Activated CD8-positive, alpha-beta memory T cell treated with anti-CD3 and anti-CD28 coated beads, Interleukin-2, amount 10 ng/mL, durations not matched to agents 7 days and 5 days (primary cell): ENCODE measurements at regions of chr14 and their contacts with region 1.

Region 1: GRCh38 chr14:22536853-22537338 is 52.1 kb downstream of the DAD1 start:
- DNase-seq: peak; percentile 94
- ATAC-seq: peak; percentile 90
- H3K4me3 Mint-ChIP-seq: peak overlapping the region; percentile 73
- H3K27ac Mint-ChIP-seq: peak overlapping the region; percentile 99
- H3K4me1 Mint-ChIP-seq: peaks cover 96% of the 10 kb centered on the region
- H3K27me3 Mint-ChIP-seq: no peaks in the 10 kb centered on the region

Region 2: GRCh38 chr14:22549981-22550673 is 13.2 kb after region 1 on chr14:
- CTCF ChIA-PET with region 1: interaction called, 25 read pairs
- DNase-seq: peak; percentile 90
- ATAC-seq: peak; percentile 59
- H3K4me3 Mint-ChIP-seq: peak overlapping the region; percentile 73
- H3K27ac Mint-ChIP-seq: peak overlapping the region; percentile 99
- H3K4me1 Mint-ChIP-seq: peaks cover 94% of the 10 kb centered on the region
- H3K27me3 Mint-ChIP-seq: no peaks in the 10 kb centered on the region

Region 3: DNA sequence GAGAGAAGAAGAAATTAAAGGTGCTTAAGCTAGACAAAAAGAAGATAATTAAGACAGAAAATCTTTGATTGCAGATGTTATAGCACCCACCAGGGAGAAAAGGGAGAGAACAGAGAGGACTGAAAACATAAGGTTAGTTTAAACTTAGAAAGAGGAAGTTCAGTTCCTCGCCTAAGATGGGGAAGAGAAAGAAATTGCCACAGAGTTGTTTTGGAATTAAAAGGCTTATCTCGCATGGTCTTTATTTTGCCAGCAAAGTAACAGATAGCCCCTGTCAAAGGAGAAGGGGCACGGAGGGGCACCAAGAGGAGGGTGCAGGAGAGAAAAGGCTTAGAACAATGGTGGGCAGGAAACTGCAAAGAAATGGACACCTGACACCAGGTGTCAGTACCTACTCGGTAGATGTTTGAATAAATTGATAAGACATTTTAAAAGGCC is 211.8 kb after region 1 on chr14:
- CTCF ChIA-PET with region 1: no interaction called
- DNase-seq: no peak
- ATAC-seq: no peak
- H3K4me3 Mint-ChIP-seq: no peak overlapping the region
- H3K27ac Mint-ChIP-seq: no peak overlapping the region
- H3K4me1 Mint-ChIP-seq: peaks cover 13% of the 10 kb centered on the region
- H3K27me3 Mint-ChIP-seq: peaks cover 25% of the 10 kb centered on the region